ENCODE measurements at regions of chr2 and their contacts with region 1.

Region 1: DNA sequence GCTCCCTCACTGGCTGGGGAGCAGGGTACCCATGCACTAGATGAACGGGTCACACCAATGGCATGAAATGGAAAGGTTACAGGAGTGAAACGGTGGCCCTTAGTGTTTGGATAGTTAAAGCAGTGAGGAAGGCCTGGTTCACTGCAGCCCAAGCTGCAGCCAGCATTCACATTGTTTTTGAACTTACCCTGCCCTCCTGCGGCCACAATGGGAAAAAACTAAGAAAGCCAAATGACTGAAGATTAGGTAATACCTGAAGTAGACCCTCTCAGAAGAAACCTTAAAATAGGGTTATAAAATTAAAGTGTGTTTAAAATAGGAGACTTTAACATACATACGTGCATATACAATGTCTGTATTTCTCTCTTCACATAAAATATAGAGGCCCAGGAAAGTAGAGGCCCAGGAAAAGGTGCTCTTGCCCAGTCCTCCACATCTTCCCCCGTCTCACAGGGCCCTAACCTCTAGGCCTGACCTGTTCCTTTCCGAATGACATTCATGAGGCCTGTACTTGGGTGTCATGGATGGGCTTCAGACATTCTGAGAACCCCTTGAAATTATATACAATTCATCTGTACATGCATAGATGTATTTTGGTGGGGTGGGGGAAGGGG is 33.3 kb downstream of the DOK1 start:
- DNase-seq: peak; percentile 78
- H3K4me3 Mint-ChIP-seq: no peak overlapping the region
- H3K27ac Mint-ChIP-seq: no peak overlapping the region
- H3K4me1 Mint-ChIP-seq: peaks cover 32% of the 10 kb centered on the region
- H3K27me3 Mint-ChIP-seq: peaks cover 16% of the 10 kb centered on the region

Region 2: DNA sequence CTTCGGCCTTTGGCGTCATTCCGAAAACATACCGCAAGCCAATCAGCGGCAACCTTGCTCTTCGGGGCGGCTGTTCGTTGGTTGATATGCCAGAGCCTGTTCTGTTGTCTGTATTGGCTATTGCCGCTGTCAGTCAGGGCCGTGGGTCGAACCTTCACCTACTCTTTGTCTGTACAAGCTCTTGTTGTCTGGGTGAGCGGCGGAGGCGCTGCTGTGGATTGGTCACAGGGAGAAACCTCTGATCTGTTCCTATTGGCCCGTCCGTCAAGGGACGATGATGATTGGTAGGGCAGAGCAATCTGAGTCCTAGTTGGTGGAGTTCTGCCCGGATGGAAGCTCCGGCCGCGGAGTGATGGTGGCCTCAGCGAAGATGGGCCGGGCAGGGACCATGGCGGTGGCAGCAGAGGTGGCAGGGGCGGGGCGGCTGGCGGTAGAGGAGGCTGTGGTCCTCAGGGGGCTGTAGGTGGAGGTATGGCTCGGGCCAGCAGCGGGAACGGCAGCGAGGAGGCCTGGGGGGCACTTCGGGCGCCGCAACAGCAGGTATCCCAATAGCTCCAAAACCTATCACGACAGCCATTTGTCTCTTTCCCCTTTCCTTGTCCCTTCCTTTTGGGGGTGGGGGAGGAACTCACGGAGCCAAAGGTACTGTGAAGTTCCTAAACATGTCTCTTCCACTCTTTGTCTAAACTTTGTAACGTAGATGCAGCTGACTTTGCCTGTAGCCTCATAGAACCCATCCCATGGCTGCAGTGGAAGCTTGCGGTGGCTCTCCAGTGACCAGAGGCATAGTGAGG is 129.4 kb before region 1 on chr2 and contains the start of gene WBP1:
- CTCF ChIA-PET with region 1: interaction called, 23 read pairs
- DNase-seq: peak; percentile 100
- H3K4me3 Mint-ChIP-seq: peak within 1 kb of the TSS; percentile 92
- H3K27ac Mint-ChIP-seq: peak within 1 kb of the TSS; percentile 98
- H3K4me1 Mint-ChIP-seq: peaks cover 64% of the 10 kb centered on the region
- H3K27me3 Mint-ChIP-seq: no peaks in the 10 kb centered on the region

Region 3: GRCh38 chr2:74524005-74524404 is 63.8 kb before region 1 on chr2:
- CTCF ChIA-PET with region 1: interaction called, 12 read pairs
- DNase-seq: no peak
- H3K4me3 Mint-ChIP-seq: no peak overlapping the region
- H3K27ac Mint-ChIP-seq: no peak overlapping the region
- H3K4me1 Mint-ChIP-seq: peaks cover 35% of the 10 kb centered on the region
- H3K27me3 Mint-ChIP-seq: peaks cover 48% of the 10 kb centered on the region

Region 4: GRCh38 chr2:74544634-74545033 is 43.1 kb before region 1 on chr2:
- CTCF ChIA-PET with region 1: interaction called, 17 read pairs
- DNase-seq: peak; percentile 41
- H3K4me3 Mint-ChIP-seq: no peak overlapping the region
- H3K27ac Mint-ChIP-seq: no peak overlapping the region
- H3K4me1 Mint-ChIP-seq: peaks cover 11% of the 10 kb centered on the region
- H3K27me3 Mint-ChIP-seq: peaks cover 81% of the 10 kb centered on the region

Region 5: GRCh38 chr2:74566754-74567085 is 21.1 kb before region 1 on chr2:
- CTCF ChIA-PET with region 1: interaction called, 57 read pairs
- DNase-seq: no peak
- H3K4me3 Mint-ChIP-seq: no peak overlapping the region
- H3K27ac Mint-ChIP-seq: no peak overlapping the region
- H3K4me1 Mint-ChIP-seq: peaks cover 29% of the 10 kb centered on the region
- H3K27me3 Mint-ChIP-seq: peaks cover 8% of the 10 kb centered on the region

Measured in activated naive CD4-positive, alpha-beta T cell treated with anti-CD3 and anti-CD28 coated beads, Interleukin-2, amount 10 ng/mL, durations not matched to agents 7 days and 5 days (primary cell).